ENCODE measurements at regions of chr2 and their contacts with region 1.

Region 1: DNA sequence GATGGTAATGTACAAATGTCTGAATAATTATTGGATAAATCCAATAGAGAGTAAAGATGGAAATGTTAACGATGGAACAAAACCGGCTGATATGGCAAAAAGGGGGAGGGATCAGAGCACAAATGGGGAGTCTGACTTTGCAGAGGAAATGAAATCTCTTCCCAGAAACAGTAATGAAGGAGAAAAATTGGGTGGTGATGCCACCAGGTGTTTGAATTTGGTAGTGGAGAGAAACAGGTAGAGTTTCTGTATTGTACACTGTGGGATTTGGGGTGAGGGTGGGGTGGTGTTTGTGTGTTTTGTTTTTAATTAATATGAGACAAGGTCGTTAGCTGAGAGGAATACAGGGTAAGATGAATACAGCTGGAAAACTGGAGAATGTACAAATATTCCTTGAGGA is 20.4 kb upstream of the XDH start:
- DNase-seq: no peak
- H3K4me3 ChIP-seq: no peak overlapping the region
- H3K27ac ChIP-seq: no peak overlapping the region
- H3K4me1 ChIP-seq: no peaks in the 10 kb centered on the region
- H3K27me3 ChIP-seq: no peaks in the 10 kb centered on the region
- CTCF ChIP-seq: no peak
- EP300 ChIP-seq: no peak
- POLR2A ChIP-seq: no peak

Region 2: DNA sequence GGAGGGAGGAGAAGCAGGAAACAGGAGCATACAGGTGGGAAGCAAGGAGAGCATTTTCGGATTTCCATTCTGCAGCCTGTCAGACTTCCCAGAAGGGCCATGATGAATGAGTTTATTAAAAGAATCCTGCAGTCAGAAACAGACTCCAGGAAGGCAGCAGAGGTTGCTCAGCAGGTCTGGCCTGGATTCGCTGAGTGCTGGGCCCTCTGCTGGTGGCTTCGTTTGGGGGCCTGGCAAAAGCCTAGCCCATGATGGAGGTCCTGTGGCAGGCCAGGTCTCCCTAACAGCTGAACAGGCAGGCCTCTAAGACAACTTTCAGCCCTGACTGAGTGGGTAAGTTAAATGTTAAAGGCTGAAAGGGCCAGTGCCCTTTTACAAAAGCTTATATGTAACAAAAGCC is 519.4 kb before region 1 on chr2:
- intact Hi-C with region 1: no loop called
- DNase-seq: no peak
- H3K4me3 ChIP-seq: no peak overlapping the region
- H3K27ac ChIP-seq: no peak overlapping the region
- H3K4me1 ChIP-seq: no peaks in the 10 kb centered on the region
- H3K27me3 ChIP-seq: no peaks in the 10 kb centered on the region
- CTCF ChIP-seq: no peak
- EP300 ChIP-seq: no peak
- POLR2A ChIP-seq: no peak

Region 3: DNA sequence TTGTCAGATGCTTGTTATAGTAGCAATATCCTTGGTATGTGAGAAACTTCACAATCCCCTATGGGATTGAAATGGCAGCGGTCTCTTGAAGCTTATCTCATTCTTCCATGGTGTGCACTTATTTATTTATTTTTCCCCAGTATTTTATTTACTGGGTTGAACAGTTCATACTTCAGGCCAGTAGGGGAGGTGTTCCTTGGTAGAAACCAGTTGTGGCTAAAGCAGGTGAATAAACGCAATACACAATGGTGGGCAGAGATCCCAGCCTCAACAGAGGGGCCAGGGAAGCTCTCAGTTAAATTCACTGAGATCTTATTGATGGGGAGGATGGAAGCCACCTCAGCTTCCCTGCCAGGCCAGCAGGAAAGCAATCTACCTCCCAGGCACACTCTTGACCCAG is 239.5 kb after region 1 on chr2:
- intact Hi-C with region 1: loop called in 1 of 4 experiments (anchors 5 kb)
- DNase-seq: no peak
- H3K4me3 ChIP-seq: no peak overlapping the region
- H3K27ac ChIP-seq: no peak overlapping the region
- H3K4me1 ChIP-seq: no peaks in the 10 kb centered on the region
- H3K27me3 ChIP-seq: no peaks in the 10 kb centered on the region
- CTCF ChIP-seq: no peak
- EP300 ChIP-seq: no peak
- POLR2A ChIP-seq: no peak